Ovary (tissue), 10 donors: ENCODE measurements at regions of chr4 and their contacts with region 1.

Region 1: DNA sequence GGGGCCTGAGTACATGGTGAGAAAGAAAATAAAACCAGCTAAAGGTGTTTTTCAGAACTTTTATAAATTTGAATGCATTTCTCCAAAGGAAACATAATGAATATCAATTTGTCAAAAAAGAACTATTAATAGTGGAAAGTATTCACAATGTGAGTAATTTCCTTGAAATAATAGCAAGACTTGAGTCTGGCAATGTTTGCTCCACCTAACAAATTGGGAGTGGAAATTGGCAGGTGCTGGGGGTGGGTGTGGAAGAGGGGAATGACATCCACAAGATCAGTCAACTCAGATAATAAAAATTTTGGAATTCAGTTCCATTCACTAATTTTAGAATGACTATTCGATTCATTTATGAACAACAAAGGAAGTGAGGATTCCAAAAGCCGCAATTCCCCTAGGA is 884.8 kb upstream of the SLIT2 start:
- DNase-seq: no peak
- H3K4me3 ChIP-seq: no peak overlapping the region
- H3K27ac ChIP-seq: no peak overlapping the region
- H3K4me1 ChIP-seq: no peaks in the 10 kb centered on the region
- H3K27me3 ChIP-seq: no peaks in the 10 kb centered on the region
- CTCF ChIP-seq: no peak
- EP300 ChIP-seq: no peak
- POLR2A ChIP-seq: no peak

Region 2: DNA sequence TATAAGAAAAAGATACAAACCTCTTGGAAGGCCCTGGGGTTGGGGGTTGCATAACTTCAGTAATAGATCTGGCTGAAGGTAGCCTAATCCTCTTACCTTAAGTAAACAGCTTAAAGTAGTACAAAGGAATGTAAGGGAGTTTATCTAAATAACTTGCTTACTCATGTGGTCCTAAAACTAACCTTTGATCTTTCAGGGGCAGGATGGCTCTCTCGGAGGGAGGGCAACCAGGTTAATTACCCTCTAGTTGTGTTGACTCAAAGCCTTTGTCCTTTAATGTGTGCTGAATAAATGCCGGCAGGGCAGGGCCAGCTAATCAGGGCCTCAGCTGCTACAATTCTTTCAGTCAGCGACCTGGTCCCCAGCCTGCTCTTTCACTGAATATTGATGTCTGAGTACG is 62.8 kb after region 1 on chr4:
- intact Hi-C with region 1: loop called in 1 of 4 experiments (anchors 2 kb)
- DNase-seq: no peak
- H3K4me3 ChIP-seq: no peak overlapping the region
- H3K27ac ChIP-seq: no peak overlapping the region
- H3K4me1 ChIP-seq: no peaks in the 10 kb centered on the region
- H3K27me3 ChIP-seq: no peaks in the 10 kb centered on the region
- CTCF ChIP-seq: no peak
- EP300 ChIP-seq: no peak
- POLR2A ChIP-seq: no peak

Region 3: DNA sequence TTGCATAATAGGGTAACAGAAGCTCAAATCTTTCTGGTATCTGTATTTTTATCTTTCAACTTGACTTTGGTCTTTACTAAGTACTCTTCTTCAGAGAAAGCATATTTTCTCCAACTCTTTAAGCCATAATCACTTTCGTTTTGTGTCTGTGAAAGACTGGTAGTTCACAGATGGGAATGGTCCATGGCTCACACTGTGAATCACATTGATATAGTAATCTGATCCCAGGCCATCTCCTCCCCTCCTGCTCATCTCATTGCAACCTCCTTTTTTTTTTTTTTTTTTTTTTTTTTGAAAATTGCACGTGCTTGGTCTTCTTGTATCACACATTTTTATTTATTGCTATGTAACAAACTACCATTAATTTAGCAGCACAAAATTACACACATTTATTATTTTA is 190.2 kb after region 1 on chr4:
- intact Hi-C with region 1: no loop called
- DNase-seq: no peak
- H3K4me3 ChIP-seq: no peak overlapping the region
- H3K27ac ChIP-seq: no peak overlapping the region
- H3K4me1 ChIP-seq: no peaks in the 10 kb centered on the region
- H3K27me3 ChIP-seq: no peaks in the 10 kb centered on the region
- CTCF ChIP-seq: no peak
- EP300 ChIP-seq: no peak
- POLR2A ChIP-seq: no peak